H1 (cell line): ENCODE measurements at regions of chr4 and their contacts with region 1.

Region 1: DNA sequence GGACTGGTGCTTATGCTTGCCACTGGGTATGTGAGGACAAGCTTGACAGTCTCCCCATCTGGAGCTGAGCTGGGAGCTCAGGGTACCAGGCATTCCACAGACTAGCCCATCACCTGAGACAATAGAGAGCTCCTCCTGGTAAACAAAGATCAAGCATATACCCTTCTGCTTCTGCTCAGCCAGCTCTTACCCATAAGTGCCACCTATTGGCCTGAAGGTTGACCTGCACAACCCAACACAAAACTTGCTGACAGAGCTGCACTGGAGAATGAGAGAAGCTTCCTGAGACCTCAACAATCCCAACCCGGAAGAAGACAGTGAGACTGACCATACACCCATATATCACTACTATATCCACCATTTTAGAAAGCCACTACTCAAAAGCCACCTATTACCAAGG is 1049.2 kb upstream of the INTU start:
- DNase-seq: peak in 1 of 2 experiments; percentile 49
- H3K4me3 ChIP-seq: no peak overlapping the region
- H3K27ac ChIP-seq: no peak overlapping the region
- H3K4me1 ChIP-seq: peaks cover 0 to 2% (median 0%) of the 10 kb centered on the region in 4 experiments; a peak in 3 of 7 replicates
- H3K27me3 ChIP-seq: no peaks in the 10 kb centered on the region
- CTCF ChIP-seq: peak; percentile 45 to 80 (median 60)
- EP300 ChIP-seq: no peak
- POLR2A ChIP-seq: no peak
- RAD21 ChIP-seq: peak; percentile 68 to 79

Region 2: GRCh38 chr4:126202226-126202625 is 381.3 kb before region 1 on chr4:
- CTCF ChIA-PET with region 1: interaction called, 10 read pairs
- POLR2A ChIA-PET with region 1: no interaction called
- DNase-seq: no peak
- H3K4me3 ChIP-seq: no peak overlapping the region
- H3K27ac ChIP-seq: no peak overlapping the region
- H3K4me1 ChIP-seq: no peaks in the 10 kb centered on the region
- H3K27me3 ChIP-seq: no peaks in the 10 kb centered on the region
- CTCF ChIP-seq: no peak
- EP300 ChIP-seq: no peak
- POLR2A ChIP-seq: no peak
- RAD21 ChIP-seq: no peak

Region 3: GRCh38 chr4:126223784-126224407 is 359.6 kb before region 1 on chr4:
- CTCF ChIA-PET with region 1: interaction called, 13 read pairs
- POLR2A ChIA-PET with region 1: no interaction called
- DNase-seq: no peak
- H3K4me3 ChIP-seq: no peak overlapping the region
- H3K27ac ChIP-seq: no peak overlapping the region
- H3K4me1 ChIP-seq: no peaks in the 10 kb centered on the region
- H3K27me3 ChIP-seq: no peaks in the 10 kb centered on the region
- CTCF ChIP-seq: peak in 1 of 3 experiments; percentile 51; a peak in 2 of 4 replicates
- EP300 ChIP-seq: no peak
- POLR2A ChIP-seq: no peak
- RAD21 ChIP-seq: peak; percentile 33 to 34

Region 4: GRCh38 chr4:126475730-126476129 is 107.8 kb before region 1 on chr4:
- CTCF ChIA-PET with region 1: interaction called, 13 read pairs
- POLR2A ChIA-PET with region 1: no interaction called
- DNase-seq: no peak
- H3K4me3 ChIP-seq: no peak overlapping the region
- H3K27ac ChIP-seq: no peak overlapping the region
- H3K4me1 ChIP-seq: no peaks in the 10 kb centered on the region
- H3K27me3 ChIP-seq: no peaks in the 10 kb centered on the region
- CTCF ChIP-seq: no peak
- EP300 ChIP-seq: no peak
- POLR2A ChIP-seq: no peak
- RAD21 ChIP-seq: no peak

Region 5: DNA sequence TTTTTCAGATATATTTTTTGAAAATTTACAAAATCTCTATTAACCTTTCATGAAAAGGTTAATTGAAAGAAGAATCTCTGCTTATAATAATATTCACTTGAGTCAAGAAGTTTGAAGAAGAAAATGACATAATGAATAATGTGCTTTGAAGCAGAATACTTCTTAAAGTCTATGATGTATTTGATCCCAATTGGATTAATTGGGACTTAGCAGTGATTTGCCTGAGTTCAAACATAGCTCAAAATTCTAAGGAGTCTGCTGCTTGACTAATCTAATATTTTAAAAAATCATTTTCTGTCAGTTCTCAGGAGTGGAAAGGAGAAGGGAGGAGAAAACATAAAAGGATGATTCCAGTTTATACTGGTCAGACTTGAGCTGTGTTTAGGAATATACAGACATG is 101.2 kb before region 1 on chr4:
- CTCF ChIA-PET with region 1: interaction called, 13 read pairs
- POLR2A ChIA-PET with region 1: no interaction called
- DNase-seq: no peak
- H3K4me3 ChIP-seq: no peak overlapping the region
- H3K27ac ChIP-seq: no peak overlapping the region
- H3K4me1 ChIP-seq: no peaks in the 10 kb centered on the region
- H3K27me3 ChIP-seq: no peaks in the 10 kb centered on the region
- CTCF ChIP-seq: no peak
- EP300 ChIP-seq: no peak
- POLR2A ChIP-seq: no peak
- RAD21 ChIP-seq: no peak

Region 6: GRCh38 chr4:126568652-126569570 is 14.6 kb before region 1 on chr4:
- CTCF ChIA-PET with region 1: interaction called, 11 read pairs
- POLR2A ChIA-PET with region 1: interaction called, 4 read pairs
- DNase-seq: no peak
- H3K4me3 ChIP-seq: no peak overlapping the region
- H3K27ac ChIP-seq: no peak overlapping the region
- H3K4me1 ChIP-seq: no peaks in the 10 kb centered on the region
- H3K27me3 ChIP-seq: no peaks in the 10 kb centered on the region
- CTCF ChIP-seq: no peak
- EP300 ChIP-seq: no peak
- POLR2A ChIP-seq: no peak
- RAD21 ChIP-seq: no peak

Region 7: GRCh38 chr4:126604268-126604867 is 20.9 kb after region 1 on chr4:
- CTCF ChIA-PET with region 1: interaction called, 22 read pairs
- POLR2A ChIA-PET with region 1: no interaction called
- DNase-seq: no peak
- H3K4me3 ChIP-seq: no peak overlapping the region
- H3K27ac ChIP-seq: no peak overlapping the region
- H3K4me1 ChIP-seq: peaks cover 0 to 3% (median 0%) of the 10 kb centered on the region in 4 experiments; a peak in 1 of 7 replicates
- H3K27me3 ChIP-seq: no peaks in the 10 kb centered on the region
- CTCF ChIP-seq: peak in 2 of 3 experiments; percentile 57 to 64; a peak in 3 of 4 replicates
- EP300 ChIP-seq: no peak
- POLR2A ChIP-seq: no peak
- RAD21 ChIP-seq: peak; percentile 68 to 72

Region 8: GRCh38 chr4:126742048-126742447 is 158.5 kb after region 1 on chr4:
- CTCF ChIA-PET with region 1: no interaction called
- POLR2A ChIA-PET with region 1: no interaction called
- DNase-seq: no peak
- H3K4me3 ChIP-seq: no peak overlapping the region
- H3K27ac ChIP-seq: no peak overlapping the region
- H3K4me1 ChIP-seq: no peaks in the 10 kb centered on the region
- H3K27me3 ChIP-seq: no peaks in the 10 kb centered on the region
- CTCF ChIP-seq: no peak
- EP300 ChIP-seq: no peak
- POLR2A ChIP-seq: no peak
- RAD21 ChIP-seq: no peak